Tibial artery (tissue), 4 donors: ENCODE measurements at regions of chr7 and their contacts with region 1.

Region 1: DNA sequence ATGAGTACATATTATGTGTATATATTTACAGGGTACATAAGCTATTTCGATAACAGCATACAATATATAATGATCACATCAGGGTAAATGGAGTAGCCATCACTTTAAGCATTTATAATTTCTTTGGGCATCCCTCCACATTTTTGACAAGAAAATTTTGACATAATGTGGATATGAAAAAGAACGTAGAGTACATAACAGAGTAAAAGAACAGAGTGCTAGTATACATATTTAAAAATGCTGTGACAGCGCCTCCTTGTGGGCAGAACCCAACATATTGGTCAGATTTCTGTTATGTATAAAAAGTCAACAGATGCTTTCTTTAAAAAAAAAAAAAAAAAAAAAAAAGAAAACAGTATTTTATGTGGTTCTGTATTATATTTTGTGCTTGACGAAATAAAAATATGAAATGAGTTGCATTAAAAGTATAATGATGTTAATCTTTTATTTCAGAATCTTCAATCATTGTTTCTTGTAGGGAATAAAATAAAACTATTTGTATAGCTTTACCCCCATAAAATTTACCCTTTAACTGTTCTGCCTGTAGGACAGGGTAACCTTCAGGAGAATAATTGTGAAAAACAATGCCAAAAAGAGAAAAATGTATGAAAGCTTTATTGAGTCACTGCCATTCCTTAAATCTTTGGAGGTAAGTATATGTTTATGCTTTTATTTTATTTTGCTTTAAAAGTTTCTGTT is 18.3 kb upstream of the HBP1 start:
- DNase-seq: peak; percentile 75 to 86
- H3K4me3 ChIP-seq: no peak overlapping the region
- H3K27ac ChIP-seq: no peak overlapping the region
- H3K4me1 ChIP-seq: peaks cover 0 to 4% (median 0%) of the 10 kb centered on the region in 4 donors
- H3K27me3 ChIP-seq: no peaks in the 10 kb centered on the region
- CTCF ChIP-seq: peak; percentile 52 to 61

Region 2: GRCh38 chr7:106947244-106947728 is 203.2 kb before region 1 on chr7:
- intact Hi-C with region 1: loop called (anchors 10 kb)
- DNase-seq: peak in 1 of 2 donors; percentile 65
- H3K4me3 ChIP-seq: no peak overlapping the region
- H3K27ac ChIP-seq: no peak overlapping the region
- H3K4me1 ChIP-seq: no peaks in the 10 kb centered on the region
- H3K27me3 ChIP-seq: no peaks in the 10 kb centered on the region
- CTCF ChIP-seq: peak; percentile 37 to 43

Region 3: GRCh38 chr7:107007007-107007891 is 143.3 kb before region 1 on chr7:
- intact Hi-C with region 1: no loop called
- DNase-seq: no peak
- H3K4me3 ChIP-seq: no peak overlapping the region
- H3K27ac ChIP-seq: no peak overlapping the region
- H3K4me1 ChIP-seq: no peaks in the 10 kb centered on the region
- H3K27me3 ChIP-seq: no peaks in the 10 kb centered on the region
- CTCF ChIP-seq: no peak

Region 4: GRCh38 chr7:107044347-107045194 is 106.0 kb before region 1 on chr7 and contains the start of gene PRKAR2B:
- intact Hi-C with region 1: loop called (anchors 10 kb)
- DNase-seq: peak; percentile 48 to 83
- H3K4me3 ChIP-seq: peak within 1 kb of the TSS; percentile 68 to 81
- H3K27ac ChIP-seq: peak within 1 kb of the TSS; percentile 72 to 78
- H3K4me1 ChIP-seq: peaks cover 0 to 14% (median 14%) of the 10 kb centered on the region in 4 donors
- H3K27me3 ChIP-seq: no peaks in the 10 kb centered on the region
- CTCF ChIP-seq: no peak